Activated naive CD8-positive, alpha-beta T cell treated with anti-CD3 and anti-CD28 coated beads, Interleukin-2, amount 10 ng/mL, durations not matched to agents 7 days and 5 days (primary cell): ENCODE measurements at regions of chr1 and their contacts with region 1.

Region 1: DNA sequence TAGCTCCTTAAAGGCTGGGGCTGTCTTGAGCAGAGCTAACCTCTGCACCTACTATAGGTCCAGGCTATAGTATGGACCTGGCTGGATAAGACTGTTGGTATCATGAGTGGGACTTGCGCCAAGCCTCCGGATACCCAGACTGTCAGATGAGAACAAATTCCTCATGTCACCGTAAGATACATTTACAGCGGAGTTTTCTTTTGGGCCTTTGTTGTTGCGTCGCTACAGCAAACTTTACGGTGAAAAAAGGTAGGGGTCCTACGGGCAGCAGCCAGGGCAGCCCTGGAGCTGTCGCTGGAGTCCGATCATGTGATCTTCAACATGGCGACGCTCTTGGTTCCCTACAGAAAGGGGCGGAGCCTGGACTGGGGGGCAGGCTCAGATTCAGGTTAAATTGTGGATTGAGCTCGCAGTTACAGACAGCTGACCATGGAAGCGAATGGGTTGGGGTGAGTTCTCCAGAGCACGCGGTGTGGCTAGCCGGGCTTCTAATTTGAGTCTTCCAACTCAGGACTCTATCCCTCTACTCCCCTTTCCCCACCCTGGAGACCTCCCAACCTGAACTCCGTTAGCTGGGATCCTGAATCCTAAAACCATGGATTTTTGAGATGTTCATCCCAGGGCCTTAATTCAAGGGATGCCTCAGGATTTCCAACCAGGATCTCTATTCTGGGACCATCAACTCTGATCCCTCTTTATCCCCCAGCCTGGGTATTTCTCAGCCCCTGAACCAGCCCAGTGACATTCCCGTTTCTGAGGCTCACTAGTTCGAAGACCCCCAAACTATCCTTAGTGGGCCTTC is at the start of gene UROD:
- DNase-seq: peak; percentile 86
- ATAC-seq: peak; percentile 71
- H3K4me3 Mint-ChIP-seq: peak within 1 kb of the TSS; percentile 89
- H3K27ac Mint-ChIP-seq: peak within 1 kb of the TSS; percentile 97
- H3K4me1 Mint-ChIP-seq: peaks cover 29% of the 10 kb centered on the region
- H3K27me3 Mint-ChIP-seq: no peaks in the 10 kb centered on the region
- total RNA-seq, gene UROD: 71.7 to 79.2 TPM

Region 2: DNA sequence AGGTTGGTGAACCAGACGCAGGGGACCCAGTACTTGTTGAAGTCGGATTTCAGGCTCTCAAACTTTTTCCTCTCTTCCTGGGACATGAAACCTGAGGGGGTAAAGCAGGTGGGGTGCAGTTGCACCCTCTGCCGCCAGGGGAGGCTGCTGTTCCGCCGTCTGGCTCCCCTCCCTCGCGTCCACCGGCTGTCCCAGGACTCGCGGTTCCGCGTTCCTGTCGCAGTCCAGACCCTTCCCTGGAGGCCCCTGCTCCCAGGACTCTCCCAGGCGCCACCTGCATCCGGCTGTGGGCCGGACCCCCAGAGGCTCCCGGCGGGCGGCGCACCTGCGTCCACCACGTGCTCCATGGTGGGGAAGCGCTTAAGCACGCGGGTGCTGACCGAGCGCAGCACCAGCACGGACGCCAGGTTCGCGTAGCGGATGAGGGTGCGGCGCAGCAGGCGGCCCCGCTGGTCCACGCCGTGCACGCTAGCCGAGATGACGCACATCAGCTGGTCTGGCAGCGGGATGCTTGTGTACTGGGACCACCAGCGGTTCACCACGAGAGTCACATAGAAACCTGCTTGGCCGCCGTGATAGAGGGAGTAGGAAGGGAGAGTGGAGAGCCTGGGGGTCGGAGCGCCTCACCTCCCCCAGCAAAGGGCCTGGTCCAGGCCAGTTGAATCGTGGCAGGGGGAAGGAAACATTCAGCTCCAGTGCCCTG is 225.7 kb before region 1 on chr1:
- POLR2A ChIA-PET with region 1: interaction called, 21 read pairs
- DNase-seq: peak; percentile 87
- ATAC-seq: peak; percentile 69
- H3K4me3 Mint-ChIP-seq: peak overlapping the region; percentile 66
- H3K27ac Mint-ChIP-seq: peak overlapping the region; percentile 71
- H3K4me1 Mint-ChIP-seq: peaks cover 26% of the 10 kb centered on the region
- H3K27me3 Mint-ChIP-seq: no peaks in the 10 kb centered on the region

Region 3: DNA sequence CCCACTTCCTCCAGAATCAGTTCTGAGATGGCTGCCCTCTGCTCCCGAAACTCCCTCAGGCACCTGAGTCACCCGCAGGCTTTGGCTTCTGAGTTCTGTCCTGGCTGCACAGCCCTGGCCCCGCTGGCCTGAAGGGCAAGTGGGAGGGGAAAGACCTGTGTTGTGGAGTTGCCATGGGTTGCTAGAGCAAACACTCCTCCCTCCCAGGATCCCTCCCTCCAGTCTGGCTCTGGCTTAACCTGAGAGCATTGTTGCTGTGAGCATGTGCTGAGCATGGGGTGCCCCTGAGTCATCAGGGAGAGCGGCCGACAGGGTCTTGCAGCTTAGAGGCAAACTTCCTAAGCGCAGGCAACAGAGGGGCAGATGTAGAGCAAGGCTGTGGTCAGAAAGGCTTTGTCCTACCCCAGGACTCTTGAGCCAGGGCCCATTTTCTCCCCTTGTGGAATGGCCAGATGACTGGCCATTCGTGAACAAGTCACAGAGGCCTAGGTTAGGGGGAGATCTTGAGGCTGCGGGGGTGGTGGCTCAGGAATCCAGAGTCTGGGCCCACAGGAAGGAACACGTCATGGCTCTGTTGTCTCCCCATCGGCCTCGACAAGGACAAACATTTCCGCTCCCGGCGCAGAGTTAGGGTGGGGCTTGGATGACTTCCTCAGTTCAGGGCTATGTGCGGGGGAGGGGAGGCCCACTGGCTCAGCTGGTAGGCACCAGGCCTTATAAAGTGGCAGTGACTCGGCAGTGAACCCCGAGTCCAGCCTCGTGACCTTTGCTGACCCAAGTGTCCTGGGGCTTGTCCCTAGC is 204.6 kb before region 1 on chr1 and contains the start of gene DYNLT4:
- POLR2A ChIA-PET with region 1: interaction called, 31 read pairs
- DNase-seq: peak; percentile 84
- ATAC-seq: peak; percentile 61
- H3K4me3 Mint-ChIP-seq: peak within 1 kb of the TSS; percentile 78
- H3K27ac Mint-ChIP-seq: peak within 1 kb of the TSS; percentile 99
- H3K4me1 Mint-ChIP-seq: peaks cover 55% of the 10 kb centered on the region
- H3K27me3 Mint-ChIP-seq: no peaks in the 10 kb centered on the region
- total RNA-seq, gene DYNLT4: 0.43 to 0.97 TPM

Region 4: GRCh38 chr1:44941424-44942324 is 70.4 kb before region 1 on chr1:
- POLR2A ChIA-PET with region 1: no interaction called
- DNase-seq: no peak
- ATAC-seq: no peak
- H3K4me3 Mint-ChIP-seq: no peak overlapping the region
- H3K27ac Mint-ChIP-seq: no peak overlapping the region
- H3K4me1 Mint-ChIP-seq: peaks cover 6% of the 10 kb centered on the region
- H3K27me3 Mint-ChIP-seq: no peaks in the 10 kb centered on the region

Region 5: GRCh38 chr1:44962729-44963128 is 49.3 kb before region 1 on chr1:
- POLR2A ChIA-PET with region 1: no interaction called
- DNase-seq: no peak
- ATAC-seq: no peak
- H3K4me3 Mint-ChIP-seq: no peak overlapping the region
- H3K27ac Mint-ChIP-seq: no peak overlapping the region
- H3K4me1 Mint-ChIP-seq: no peaks in the 10 kb centered on the region
- H3K27me3 Mint-ChIP-seq: no peaks in the 10 kb centered on the region

Region 6: GRCh38 chr1:44985747-44986359 is 26.2 kb before region 1 on chr1:
- POLR2A ChIA-PET with region 1: interaction called, 45 read pairs
- DNase-seq: no peak
- ATAC-seq: peak; percentile 6
- H3K4me3 Mint-ChIP-seq: peak overlapping the region; percentile 100
- H3K27ac Mint-ChIP-seq: peak overlapping the region; percentile 97
- H3K4me1 Mint-ChIP-seq: peaks cover 20% of the 10 kb centered on the region
- H3K27me3 Mint-ChIP-seq: no peaks in the 10 kb centered on the region

Region 7: DNA sequence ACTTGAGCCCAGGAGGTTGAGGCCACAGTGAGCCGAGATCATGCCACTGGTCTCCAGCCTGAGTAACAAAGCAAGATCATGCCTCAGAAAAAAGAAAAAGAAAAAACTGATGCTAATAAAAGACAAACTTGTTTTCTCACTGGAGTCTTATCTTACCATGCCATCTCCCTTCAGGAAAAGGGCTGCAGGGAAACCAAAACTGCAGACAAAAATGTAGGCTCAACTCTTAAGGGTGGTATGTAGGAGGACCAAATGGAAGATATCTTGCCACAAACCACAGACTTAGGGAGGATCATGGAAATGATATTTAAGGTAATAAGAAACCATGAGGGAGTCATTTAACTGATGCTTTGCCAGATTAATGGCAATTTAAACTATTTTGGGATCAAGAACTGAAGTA is 32.9 kb after region 1 on chr1:
- POLR2A ChIA-PET with region 1: no interaction called
- DNase-seq: no peak
- ATAC-seq: no peak
- H3K4me3 Mint-ChIP-seq: no peak overlapping the region
- H3K27ac Mint-ChIP-seq: no peak overlapping the region
- H3K4me1 Mint-ChIP-seq: no peaks in the 10 kb centered on the region
- H3K27me3 Mint-ChIP-seq: no peaks in the 10 kb centered on the region

Region 8: GRCh38 chr1:45097944-45098343 is 85.9 kb after region 1 on chr1:
- POLR2A ChIA-PET with region 1: no interaction called
- DNase-seq: no peak
- ATAC-seq: no peak
- H3K4me3 Mint-ChIP-seq: no peak overlapping the region
- H3K27ac Mint-ChIP-seq: no peak overlapping the region
- H3K4me1 Mint-ChIP-seq: no peaks in the 10 kb centered on the region
- H3K27me3 Mint-ChIP-seq: peaks cover 24% of the 10 kb centered on the region

Region 9: GRCh38 chr1:45326627-45327623 is 314.9 kb after region 1 on chr1 and contains the start of gene HPDL:
- POLR2A ChIA-PET with region 1: interaction called, 11 read pairs
- DNase-seq: peak; percentile 77
- ATAC-seq: peak; percentile 83
- H3K4me3 Mint-ChIP-seq: peak within 1 kb of the TSS; percentile 82
- H3K27ac Mint-ChIP-seq: peak within 1 kb of the TSS; percentile 81
- H3K4me1 Mint-ChIP-seq: peaks cover 16% of the 10 kb centered on the region
- H3K27me3 Mint-ChIP-seq: peaks cover 4% of the 10 kb centered on the region
- total RNA-seq, gene HPDL: 8.4 to 10.3 TPM